Heart left ventricle (tissue), 16 donors: ENCODE measurements at regions of chr1 and their contacts with region 1.

Region 1: GRCh38 chr1:175208773-175209492 is 16.4 kb upstream of the KIAA0040 start:
- DNase-seq: no peak
- ATAC-seq: peak in 1 of 4 donors; percentile 28
- H3K4me3 ChIP-seq: no peak overlapping the region
- H3K27ac ChIP-seq: peak overlapping the region in 2 of 12 donors; percentile 14 to 71
- H3K4me1 ChIP-seq: peaks cover 0 to 20% (median 0%) of the 10 kb centered on the region in 12 donors
- H3K27me3 ChIP-seq: no peaks in the 10 kb centered on the region
- CTCF ChIP-seq: no peak
- POLR2A ChIP-seq: no peak

Region 2: DNA sequence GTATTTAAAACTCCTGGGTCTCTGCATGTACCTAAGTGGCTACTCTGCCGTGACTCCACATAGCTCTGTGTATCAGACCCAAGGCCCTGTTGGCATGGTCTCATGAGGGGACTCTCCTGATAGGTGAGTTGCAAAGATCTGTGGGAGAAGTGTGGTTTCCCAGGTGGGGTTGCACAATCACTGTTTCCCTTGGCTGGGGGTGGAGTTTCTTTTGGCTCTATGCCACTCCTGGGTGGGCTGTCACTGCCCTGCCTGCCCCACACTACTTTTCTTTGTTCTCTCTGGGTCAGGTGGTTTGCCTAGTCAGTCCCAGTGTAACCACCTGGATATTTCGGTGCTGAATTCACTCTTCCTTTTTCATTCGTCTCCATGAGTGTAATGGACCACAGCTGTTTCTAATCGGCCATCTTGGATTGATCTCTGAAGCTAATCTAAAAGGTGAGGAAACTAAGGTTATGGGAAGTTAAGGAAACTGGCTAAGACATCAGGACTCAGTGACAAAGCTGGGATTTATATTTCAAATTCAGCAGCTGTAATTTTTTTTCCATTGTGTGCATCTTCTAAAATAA is 306.3 kb before region 1 on chr1:
- intact Hi-C with region 1: no loop called
- DNase-seq: no peak
- ATAC-seq: no peak
- H3K4me3 ChIP-seq: no peak overlapping the region
- H3K27ac ChIP-seq: no peak overlapping the region
- H3K4me1 ChIP-seq: peaks cover 0 to 5% (median 0%) of the 10 kb centered on the region in 12 donors
- H3K27me3 ChIP-seq: no peaks in the 10 kb centered on the region
- CTCF ChIP-seq: no peak
- POLR2A ChIP-seq: no peak

Region 3: GRCh38 chr1:175267716-175268384 is 58.9 kb after region 1 on chr1:
- intact Hi-C with region 1: loop called in 1 of 10 experiments (anchors 10 kb)
- DNase-seq: peak; percentile 64 to 85 (median 76)
- ATAC-seq: peak; percentile 86 to 93 (median 90)
- H3K4me3 ChIP-seq: no peak overlapping the region
- H3K27ac ChIP-seq: peak overlapping the region; percentile 28 to 74 (median 64)
- H3K4me1 ChIP-seq: peaks cover 0 to 25% (median 5%) of the 10 kb centered on the region in 12 donors
- H3K27me3 ChIP-seq: peaks cover 0 to 4% (median 0%) of the 10 kb centered on the region in 9 donors
- CTCF ChIP-seq: no peak
- POLR2A ChIP-seq: no peak